Astrocyte of the cerebellum (primary cell): ENCODE measurements at regions of chr6 and their contacts with region 1.

Region 1: GRCh38 chr6:152386131-152386530 is 251.0 kb downstream of the SYNE1 start:
- DNase-seq: no peak
- H3K4me3 ChIP-seq: no peak overlapping the region
- CTCF ChIP-seq: no peak

Region 2: GRCh38 chr6:152458648-152459644 is 72.8 kb after region 1 on chr6:
- in situ Hi-C with region 1: loop called (anchors 5 kb)
- DNase-seq: no peak
- H3K4me3 ChIP-seq: no peak overlapping the region
- CTCF ChIP-seq: no peak

Region 3: DNA sequence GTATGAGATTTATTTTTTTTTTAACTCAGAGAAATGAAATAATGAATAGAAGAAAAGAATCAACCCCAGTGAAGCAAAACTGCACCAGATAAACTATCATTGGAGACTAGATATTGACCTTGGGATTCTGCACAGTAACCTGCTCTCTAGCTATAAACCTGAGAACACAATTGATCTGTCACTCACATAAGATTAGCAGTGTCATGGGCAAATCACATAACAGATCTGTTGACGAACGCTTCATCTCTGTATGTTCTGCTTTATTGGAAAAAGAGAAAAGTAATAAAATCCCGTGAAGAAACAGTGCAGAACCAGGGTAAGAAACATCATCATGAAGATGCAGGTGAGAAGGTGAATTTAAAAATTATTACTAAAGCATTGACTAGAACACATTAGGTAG is 797.8 kb after region 1 on chr6:
- in situ Hi-C with region 1: no loop called
- DNase-seq: no peak
- H3K4me3 ChIP-seq: no peak overlapping the region
- CTCF ChIP-seq: no peak